HEK293T (cell line): ENCODE measurements at regions of chr1 and their contacts with region 1.

Region 1: GRCh38 chr1:11893907-11894251 is 32.3 kb downstream of the KIAA2013 start:
- DNase-seq: peak; percentile 81

Region 2: GRCh38 chr1:11838349-11839272 is 55.3 kb before region 1 on chr1:
- CTCF ChIA-PET with region 1: interaction called, 17 read pairs
- POLR2A ChIA-PET with region 1: no interaction called
- DNase-seq: peak; percentile 91

Region 3: DNA sequence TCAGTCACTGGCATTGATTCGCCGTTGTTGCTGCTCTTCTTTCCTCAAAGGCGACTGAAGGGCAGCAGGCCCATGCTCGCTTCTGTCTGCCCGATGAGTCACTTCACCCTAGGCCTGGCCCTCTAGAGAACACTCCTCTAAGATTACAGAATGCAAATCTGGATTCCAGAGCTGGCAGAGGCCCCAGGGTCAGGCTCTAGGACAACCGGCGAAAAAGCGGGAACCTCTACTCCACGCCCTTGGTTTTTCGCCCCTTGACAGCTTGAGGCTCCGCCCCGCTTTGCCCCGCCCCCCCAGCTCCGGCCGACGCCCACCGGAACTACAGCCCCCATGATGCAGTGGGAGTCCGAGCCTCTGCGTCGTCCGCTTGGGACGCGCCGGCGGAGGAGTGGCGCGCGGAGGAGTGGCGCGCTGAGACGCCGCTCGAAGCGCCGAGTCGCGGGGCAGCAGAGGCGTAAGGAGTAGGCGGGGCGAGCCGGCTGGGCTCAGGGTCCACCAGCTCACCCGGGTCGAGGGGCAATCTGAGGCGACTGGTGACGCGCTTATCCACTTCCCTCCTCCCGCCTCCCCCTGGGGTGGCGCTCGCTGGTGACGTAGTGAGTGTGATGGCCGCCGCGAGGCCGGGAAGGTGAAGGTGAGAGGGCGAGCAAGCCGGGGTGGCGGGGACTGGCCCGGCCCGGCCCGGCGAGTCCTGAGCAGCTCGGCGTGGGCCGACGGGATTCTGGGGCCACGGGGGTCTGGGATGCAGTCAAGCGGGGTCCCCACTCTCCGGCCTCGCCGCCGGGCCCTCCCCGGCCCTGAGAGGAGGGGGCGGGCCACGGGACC is 86.2 kb after region 1 on chr1 and contains the start of gene MFN2:
- CTCF ChIA-PET with region 1: no interaction called
- POLR2A ChIA-PET with region 1: no interaction called
- DNase-seq: peak; percentile 96